Naive thymus-derived CD4-positive, alpha-beta T cell (primary cell): ENCODE measurements at regions of chr19 and their contacts with region 1.

Region 1: DNA sequence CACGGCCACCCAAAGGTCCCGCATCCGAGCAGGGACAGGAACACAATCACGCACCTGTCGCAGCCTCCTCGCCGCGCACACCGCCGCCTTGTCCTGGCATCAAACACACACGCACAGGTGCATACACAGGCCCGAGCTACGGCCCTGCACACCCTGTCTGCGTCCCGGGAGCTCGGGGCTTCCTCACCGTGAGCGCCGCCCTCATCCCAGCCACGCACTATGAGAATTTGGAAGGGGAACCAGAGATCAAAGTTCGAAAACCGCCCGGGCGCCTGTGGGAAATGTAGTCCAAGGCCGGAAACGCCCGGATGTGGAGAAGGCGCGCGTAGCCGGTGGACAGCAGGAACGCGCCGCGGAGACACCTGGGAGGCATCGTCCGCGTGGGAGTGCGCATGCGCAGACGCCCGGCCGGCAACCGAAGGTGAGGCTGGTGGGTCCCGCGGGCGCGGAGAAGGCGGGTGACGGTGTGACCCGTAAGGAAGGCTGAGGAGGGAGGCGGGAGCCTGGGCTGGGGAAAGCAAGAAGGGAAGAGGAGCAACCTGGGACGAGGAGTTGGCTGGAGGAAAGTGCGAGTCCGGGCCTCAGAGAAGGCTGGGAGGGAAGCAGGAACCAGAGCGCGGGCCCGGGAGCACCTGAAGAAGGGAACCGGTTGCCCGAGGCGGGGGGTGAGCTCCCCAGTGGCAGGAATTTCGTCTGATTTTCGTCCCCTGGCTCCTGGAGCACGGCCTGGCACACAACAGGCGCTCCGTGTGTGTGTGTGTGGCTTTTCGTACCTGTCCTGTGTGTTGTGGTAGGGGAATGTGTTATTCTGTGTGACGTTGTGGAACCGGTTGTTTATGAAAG is at the start of gene ZNF567:
- DNase-seq: peak; percentile 90 to 99 (median 93)
- ATAC-seq: peak; percentile 97
- H3K4me3 ChIP-seq: peak within 1 kb of the TSS; percentile 85
- H3K4me3 Mint-ChIP-seq: peak within 1 kb of the TSS; percentile 94 to 100 (median 98)
- H3K27ac ChIP-seq: peak within 1 kb of the TSS; percentile 86
- H3K27ac Mint-ChIP-seq: peak within 1 kb of the TSS; percentile 92 to 97 (median 95)
- H3K4me1 ChIP-seq: peaks cover 13 to 22% of the 10 kb centered on the region in 2 donors
- H3K4me1 Mint-ChIP-seq: peaks cover 26 to 49% (median 40%) of the 10 kb centered on the region in 7 donors
- H3K27me3 ChIP-seq: no peaks in the 10 kb centered on the region
- H3K27me3 Mint-ChIP-seq: peaks cover 0 to 5% (median 0%) of the 10 kb centered on the region in 5 donors
- total RNA-seq, gene ZNF567: 7.0 to 18.3 (median 9.3) TPM

Region 2: GRCh38 chr19:36132489-36132891 is 554.9 kb before region 1 on chr19:
- CTCF ChIA-PET with region 1: no interaction called
- POLR2A ChIA-PET with region 1: no interaction called
- intact Hi-C with region 1: loop called in 1 of 2 experiments (anchors 10 kb)
- DNase-seq: no peak
- ATAC-seq: peak; percentile 50
- H3K4me3 ChIP-seq: no peak overlapping the region
- H3K4me3 Mint-ChIP-seq: peak overlapping the region in 2 of 10 donors; percentile 12 to 29
- H3K27ac ChIP-seq: no peak overlapping the region
- H3K27ac Mint-ChIP-seq: peak overlapping the region in 1 of 9 donors; percentile 80
- H3K4me1 ChIP-seq: no peaks in the 10 kb centered on the region
- H3K4me1 Mint-ChIP-seq: peaks cover 0 to 34% (median 5%) of the 10 kb centered on the region in 7 donors
- H3K27me3 ChIP-seq: no peaks in the 10 kb centered on the region
- H3K27me3 Mint-ChIP-seq: no peaks in the 10 kb centered on the region

Region 3: DNA sequence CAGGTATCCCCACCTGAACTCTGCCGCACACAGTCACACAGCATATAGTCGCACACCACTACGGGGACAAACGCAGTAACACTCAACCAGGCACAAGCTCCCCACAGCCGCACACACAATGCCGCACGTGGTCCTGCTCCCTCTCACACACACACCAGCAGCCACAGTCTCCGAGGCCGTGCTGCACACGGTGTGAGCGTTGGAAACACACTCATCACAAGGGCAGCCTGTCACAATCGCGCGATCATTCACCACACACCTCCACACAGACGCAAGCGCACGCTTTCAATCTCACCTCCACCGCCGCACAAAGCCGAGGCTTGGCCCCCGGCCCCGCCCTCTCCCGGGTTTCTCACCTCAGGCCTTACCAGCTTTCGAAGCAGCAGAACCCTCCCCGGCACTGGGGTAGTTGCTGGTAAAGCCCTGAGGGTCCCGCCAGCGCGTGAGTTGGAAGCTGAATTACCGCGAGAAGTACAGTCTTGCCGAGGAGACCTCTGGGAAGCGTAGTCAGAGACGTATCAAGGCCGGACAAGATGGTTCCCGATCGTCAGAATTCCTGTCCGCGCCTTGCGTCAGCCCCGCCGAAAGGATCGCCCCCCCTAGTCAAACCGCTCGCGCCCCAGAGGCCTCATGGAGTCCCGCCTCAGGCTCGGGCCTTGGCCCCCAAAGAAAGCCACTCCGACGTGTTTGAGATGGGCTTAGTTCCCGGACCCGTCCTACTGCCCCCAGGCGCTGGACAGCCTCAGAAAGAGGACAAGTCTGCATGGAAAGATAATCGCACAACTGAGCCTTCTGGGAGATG is 198.1 kb before region 1 on chr19 and contains the start of gene ZNF566:
- CTCF ChIA-PET with region 1: no interaction called
- POLR2A ChIA-PET with region 1: no interaction called
- intact Hi-C with region 1: loop called (anchors 1 kb)
- DNase-seq: peak; percentile 74 to 98 (median 94)
- ATAC-seq: peak; percentile 95
- H3K4me3 ChIP-seq: peak within 1 kb of the TSS; percentile 97
- H3K4me3 Mint-ChIP-seq: peak within 1 kb of the TSS; percentile 93 to 99 (median 98)
- H3K27ac ChIP-seq: peak within 1 kb of the TSS; percentile 90
- H3K27ac Mint-ChIP-seq: peak within 1 kb of the TSS; percentile 93 to 99 (median 98)
- H3K4me1 ChIP-seq: peaks cover 9 to 10% of the 10 kb centered on the region in 2 donors
- H3K4me1 Mint-ChIP-seq: peaks cover 22 to 43% (median 30%) of the 10 kb centered on the region in 7 donors
- H3K27me3 ChIP-seq: no peaks in the 10 kb centered on the region
- H3K27me3 Mint-ChIP-seq: no peaks in the 10 kb centered on the region
- total RNA-seq, gene ZNF566: 9.2 to 29.8 (median 9.3) TPM

Region 4: GRCh38 chr19:36514012-36514612 is 173.3 kb before region 1 on chr19:
- CTCF ChIA-PET with region 1: no interaction called
- POLR2A ChIA-PET with region 1: no interaction called
- intact Hi-C with region 1: no loop called
- DNase-seq: no peak
- ATAC-seq: no peak
- H3K4me3 ChIP-seq: peak overlapping the region; percentile 4
- H3K4me3 Mint-ChIP-seq: no peak overlapping the region
- H3K27ac ChIP-seq: no peak overlapping the region
- H3K27ac Mint-ChIP-seq: no peak overlapping the region
- H3K4me1 ChIP-seq: no peaks in the 10 kb centered on the region
- H3K4me1 Mint-ChIP-seq: peaks cover 0 to 6% (median 4%) of the 10 kb centered on the region in 7 donors
- H3K27me3 ChIP-seq: no peaks in the 10 kb centered on the region
- H3K27me3 Mint-ChIP-seq: no peaks in the 10 kb centered on the region

Region 5: GRCh38 chr19:36665832-36666231 is 21.6 kb before region 1 on chr19:
- CTCF ChIA-PET with region 1: no interaction called
- POLR2A ChIA-PET with region 1: interaction called, 3 read pairs
- intact Hi-C with region 1: loop called (anchors 1 kb)
- DNase-seq: peak in 1 of 9 donors; percentile 2
- ATAC-seq: no peak
- H3K4me3 ChIP-seq: peak overlapping the region; percentile 88
- H3K4me3 Mint-ChIP-seq: peak overlapping the region; percentile 91 to 100 (median 98)
- H3K27ac ChIP-seq: no peak overlapping the region
- H3K27ac Mint-ChIP-seq: peak overlapping the region; percentile 29 to 99 (median 93)
- H3K4me1 ChIP-seq: peaks cover 0 to 10% of the 10 kb centered on the region in 2 donors
- H3K4me1 Mint-ChIP-seq: peaks cover 17 to 42% (median 35%) of the 10 kb centered on the region in 7 donors
- H3K27me3 ChIP-seq: no peaks in the 10 kb centered on the region
- H3K27me3 Mint-ChIP-seq: no peaks in the 10 kb centered on the region

Region 6: DNA sequence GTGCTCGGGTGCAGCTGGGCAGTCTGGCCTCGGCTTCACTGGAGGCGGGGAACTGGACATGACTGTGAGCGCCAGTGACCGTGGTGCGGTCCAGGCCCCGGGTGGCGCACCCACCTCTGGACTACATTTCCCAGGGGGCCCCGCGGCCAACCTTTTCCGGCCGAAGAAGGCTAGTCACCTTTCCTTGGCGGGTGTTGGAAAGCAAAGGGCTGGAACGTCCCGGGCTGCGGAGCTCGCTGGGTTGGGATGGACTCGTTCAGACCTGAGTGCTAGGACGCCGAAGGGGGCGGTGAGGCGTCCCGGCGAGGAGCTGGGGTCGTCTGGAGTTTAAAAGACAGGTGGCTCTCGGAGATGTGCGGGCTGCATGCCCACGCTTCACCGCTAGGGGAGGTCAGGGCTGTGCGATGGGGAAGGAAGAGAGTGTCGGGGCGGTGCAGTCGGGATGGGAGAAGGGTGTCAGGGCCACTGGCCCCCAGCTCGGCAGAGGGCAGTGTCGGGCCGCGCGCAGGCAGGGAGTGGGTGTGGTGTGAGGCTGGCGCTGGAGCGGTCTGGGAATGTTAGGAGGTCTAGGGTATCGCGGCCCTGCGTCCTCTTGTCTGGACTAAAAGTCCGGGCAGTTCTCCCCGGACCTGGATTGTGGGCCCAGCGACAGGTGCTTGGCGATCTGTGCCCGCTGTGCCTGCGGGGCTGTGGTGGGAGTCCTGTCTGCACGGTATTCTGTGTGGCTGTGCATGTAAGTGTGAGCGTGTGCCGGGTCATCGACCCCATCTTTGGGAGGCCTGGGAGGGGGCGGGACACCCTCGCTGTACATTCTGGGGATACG is 285.8 kb after region 1 on chr19:
- CTCF ChIA-PET with region 1: no interaction called
- POLR2A ChIA-PET with region 1: no interaction called
- intact Hi-C with region 1: loop called (anchors 2 to 5 kb)
- DNase-seq: peak; percentile 56 to 84 (median 73)
- ATAC-seq: peak; percentile 96
- H3K4me3 ChIP-seq: peak overlapping the region; percentile 100
- H3K4me3 Mint-ChIP-seq: peak overlapping the region; percentile 92 to 99 (median 97)
- H3K27ac ChIP-seq: peak overlapping the region; percentile 75
- H3K27ac Mint-ChIP-seq: peak overlapping the region; percentile 83 to 97 (median 92)
- H3K4me1 ChIP-seq: peaks cover 5 to 15% of the 10 kb centered on the region in 2 donors
- H3K4me1 Mint-ChIP-seq: peaks cover 9 to 22% (median 13%) of the 10 kb centered on the region in 7 donors
- H3K27me3 ChIP-seq: no peaks in the 10 kb centered on the region
- H3K27me3 Mint-ChIP-seq: no peaks in the 10 kb centered on the region

Region 7: GRCh38 chr19:37594304-37594981 is 907.0 kb after region 1 on chr19 and contains the starts of genes ZNF540 and ZNF571:
- CTCF ChIA-PET with region 1: no interaction called
- POLR2A ChIA-PET with region 1: no interaction called
- intact Hi-C with region 1: loop called in 1 of 2 experiments (anchors 2 kb)
- DNase-seq: peak; percentile 70 to 95 (median 92)
- ATAC-seq: peak; percentile 96
- H3K4me3 ChIP-seq: peak within 1 kb of the TSS; percentile 80
- H3K4me3 Mint-ChIP-seq: peak within 1 kb of the TSS; percentile 94 to 100 (median 98)
- H3K27ac ChIP-seq: peak within 1 kb of the TSS; percentile 93
- H3K27ac Mint-ChIP-seq: peak within 1 kb of the TSS; percentile 93 to 100 (median 99)
- H3K4me1 ChIP-seq: peaks cover 7 to 18% of the 10 kb centered on the region in 2 donors
- H3K4me1 Mint-ChIP-seq: peaks cover 13 to 56% (median 39%) of the 10 kb centered on the region in 7 donors
- H3K27me3 ChIP-seq: no peaks in the 10 kb centered on the region
- H3K27me3 Mint-ChIP-seq: no peaks in the 10 kb centered on the region
- total RNA-seq, gene ZNF540: 0.99 to 22.7 (median 17.6) TPM
- total RNA-seq, gene ZNF571: 1.5 to 12.4 (median 9.0) TPM